Endothelial cell of umbilical vein (primary cell): ENCODE measurements at regions of chr16 and their contacts with region 1.

Region 1: DNA sequence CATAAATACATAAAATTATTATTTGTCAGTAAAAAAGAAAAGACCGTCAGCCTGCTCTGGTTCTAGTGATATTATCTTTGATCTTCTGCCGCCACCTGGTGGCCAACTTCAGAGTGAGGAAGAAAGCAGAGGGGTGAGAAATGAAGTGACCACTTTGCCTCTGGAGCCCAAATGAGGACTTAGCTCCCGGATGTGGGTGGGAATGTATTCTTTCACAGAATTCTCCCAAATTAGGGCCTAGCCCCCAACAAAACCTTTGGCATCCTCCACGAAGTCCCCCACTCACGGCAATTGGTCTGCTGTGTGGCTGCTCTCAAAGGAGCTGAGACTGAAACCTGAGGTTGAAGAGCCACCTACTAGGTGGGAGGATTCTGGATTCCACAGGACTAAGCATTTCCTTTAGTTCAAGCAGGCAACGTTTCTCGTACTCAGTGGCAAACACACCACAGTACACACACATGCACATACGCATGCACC is 4.9 kb upstream of the ZNF267 start:
- DNase-seq: peak; percentile 77
- H3K4me3 ChIP-seq: no peak overlapping the region
- H3K27ac ChIP-seq: peak overlapping the region; percentile 56
- H3K4me1 ChIP-seq: peaks cover 24% of the 10 kb centered on the region
- H3K27me3 ChIP-seq: peaks cover 2 to 10% of the 10 kb centered on the region in 2 experiments
- CTCF ChIP-seq: peak; percentile 62 to 63
- POLR2A ChIP-seq: no peak

Region 2: GRCh38 chr16:30844671-30845449 is 1023.9 kb before region 1 on chr16:
- CTCF ChIA-PET with region 1: no interaction called
- POLR2A ChIA-PET with region 1: no interaction called
- dilution Hi-C with region 1: no loop called
- intact Hi-C with region 1: loop called (anchors 5 kb)
- DNase-seq: peak; percentile 81
- H3K4me3 ChIP-seq: no peak overlapping the region
- H3K27ac ChIP-seq: no peak overlapping the region
- H3K4me1 ChIP-seq: no peaks in the 10 kb centered on the region
- H3K27me3 ChIP-seq: no peaks in the 10 kb centered on the region
- CTCF ChIP-seq: peak; percentile 80 to 82
- POLR2A ChIP-seq: no peak

Region 3: DNA sequence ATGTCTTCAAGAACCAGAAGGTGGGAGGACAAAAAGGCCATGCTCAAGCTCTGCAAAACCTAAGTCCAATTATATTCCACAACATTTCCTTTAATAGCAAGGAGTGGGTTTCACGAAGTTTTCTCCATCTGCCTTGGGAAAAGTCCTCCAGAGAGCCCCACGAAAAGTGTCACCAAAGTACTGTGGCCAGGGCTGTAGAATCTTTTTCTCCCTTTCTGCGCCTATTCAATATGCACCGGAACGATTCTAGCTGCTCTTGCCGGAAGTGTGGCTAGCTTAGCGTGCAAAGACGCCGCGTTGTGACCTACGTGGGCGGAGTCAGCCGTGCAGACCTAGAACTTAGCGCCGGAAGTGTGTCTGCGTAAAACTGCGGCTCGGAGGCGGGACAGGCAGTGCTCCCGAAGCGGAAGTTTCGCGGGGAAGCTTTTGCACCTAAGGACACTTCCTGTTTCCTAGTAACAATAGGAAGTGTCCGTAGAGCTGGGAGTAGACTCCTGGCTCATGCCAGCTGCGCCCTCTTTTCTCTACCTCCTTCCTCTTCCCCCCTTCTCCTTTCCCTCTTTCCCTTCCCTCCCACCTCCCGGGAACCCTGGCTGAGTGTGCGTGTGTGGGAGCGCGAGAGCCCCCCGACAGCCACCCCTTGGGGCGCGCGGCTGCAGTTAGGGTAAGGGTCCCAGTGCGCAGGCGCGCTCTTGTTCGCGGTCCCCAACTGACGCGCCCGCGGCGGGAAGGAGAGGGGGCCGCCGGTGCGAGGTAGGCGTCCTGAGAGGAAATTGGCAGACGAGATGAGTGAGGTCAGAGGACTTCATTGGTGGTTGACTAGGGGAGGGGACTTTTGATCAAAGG is 794.5 kb before region 1 on chr16 and contains the starts of genes ZNF646 and ZNF668:
- CTCF ChIA-PET with region 1: interaction called, 5 read pairs
- POLR2A ChIA-PET with region 1: no interaction called
- dilution Hi-C with region 1: no loop called
- intact Hi-C with region 1: loop called (anchors 10 kb)
- DNase-seq: peak; percentile 99
- H3K4me3 ChIP-seq: peak within 1 kb of the TSS; percentile 68 to 87 (median 87)
- H3K27ac ChIP-seq: peak within 1 kb of the TSS; percentile 86
- H3K4me1 ChIP-seq: peaks cover 14% of the 10 kb centered on the region
- H3K27me3 ChIP-seq: no peaks in the 10 kb centered on the region
- CTCF ChIP-seq: no peak
- POLR2A ChIP-seq: peak; percentile 84
- total RNA-seq, gene ZNF646: 13.1 and 15.9 TPM in 2 replicates
- total RNA-seq, gene ZNF668: 11.6 and 13.3 TPM in 2 replicates

Region 4: DNA sequence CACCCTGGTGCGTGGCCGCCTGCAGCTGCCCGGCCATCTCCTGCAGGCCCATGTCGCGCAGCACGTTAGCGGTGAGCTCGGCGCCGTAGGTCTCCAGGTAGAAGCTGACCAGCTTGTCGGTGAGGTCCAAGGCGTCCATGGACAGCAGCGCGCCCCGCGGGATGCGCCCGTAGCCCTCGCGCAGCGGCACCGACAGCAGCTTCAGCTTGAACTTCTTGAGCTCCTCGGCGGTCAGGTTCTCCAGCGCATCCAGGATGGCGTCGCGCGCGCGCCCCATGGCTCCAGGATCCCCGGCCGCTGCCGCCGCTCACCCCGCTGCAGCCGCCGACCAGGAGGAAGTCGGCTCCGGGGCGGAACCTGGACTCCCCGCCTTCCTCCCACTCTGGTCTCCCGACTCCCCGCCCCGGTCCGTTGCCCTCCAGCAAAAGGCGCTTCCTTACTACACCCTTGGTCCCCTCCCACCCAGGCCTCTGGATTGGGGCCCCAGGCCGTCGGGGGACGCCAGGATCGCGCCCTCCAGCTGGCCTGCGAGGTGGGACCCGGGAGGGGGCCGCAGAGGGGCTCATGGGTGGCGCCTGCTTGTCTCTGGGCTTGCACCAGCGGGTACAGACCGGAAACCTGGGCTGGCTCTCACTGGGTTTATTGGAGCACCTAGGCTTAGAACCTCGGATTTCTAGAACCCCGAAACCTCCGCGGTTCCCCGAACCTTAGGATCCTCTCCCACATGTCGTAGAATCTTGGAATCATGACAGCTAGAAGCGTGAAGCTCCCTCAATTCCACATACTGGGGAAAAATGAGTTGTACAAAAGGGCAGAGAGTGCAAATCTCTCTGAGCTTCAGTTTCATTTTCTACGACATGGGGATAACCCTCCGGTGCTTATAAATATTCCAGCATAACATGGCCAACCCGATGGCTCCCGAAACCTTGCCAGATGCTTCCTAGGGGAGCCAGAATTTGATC is 666.0 kb before region 1 on chr16 and contains the start of gene PYCARD:
- CTCF ChIA-PET with region 1: no interaction called
- POLR2A ChIA-PET with region 1: interaction called, 3 read pairs
- dilution Hi-C with region 1: no loop called
- intact Hi-C with region 1: loop called (anchors 2 kb)
- DNase-seq: peak; percentile 36
- H3K4me3 ChIP-seq: peak within 1 kb of the TSS; percentile 26 to 62 (median 36)
- H3K27ac ChIP-seq: no peak within 1 kb of the TSS
- H3K4me1 ChIP-seq: peaks cover 4% of the 10 kb centered on the region
- H3K27me3 ChIP-seq: peaks cover 2 to 6% of the 10 kb centered on the region in 2 experiments
- CTCF ChIP-seq: no peak
- POLR2A ChIP-seq: no peak
- total RNA-seq, gene PYCARD: 19.1 and 23.0 TPM in 2 replicates

Region 5: GRCh38 chr16:31458844-31459721 is 409.6 kb before region 1 on chr16 and contains the start of gene ARMC5:
- CTCF ChIA-PET with region 1: interaction called, 25 read pairs
- POLR2A ChIA-PET with region 1: interaction called, 6 read pairs
- dilution Hi-C with region 1: no loop called
- intact Hi-C with region 1: loop called (anchors 1 kb)
- DNase-seq: peak; percentile 96
- H3K4me3 ChIP-seq: peak within 1 kb of the TSS; percentile 41 to 81 (median 71)
- H3K27ac ChIP-seq: peak within 1 kb of the TSS; percentile 96
- H3K4me1 ChIP-seq: peaks cover 23% of the 10 kb centered on the region
- H3K27me3 ChIP-seq: no peaks in the 10 kb centered on the region
- CTCF ChIP-seq: peak; percentile 47 to 70
- POLR2A ChIP-seq: peak; percentile 38
- total RNA-seq, gene ARMC5: 17.3 and 17.9 TPM in 2 replicates

Region 6: DNA sequence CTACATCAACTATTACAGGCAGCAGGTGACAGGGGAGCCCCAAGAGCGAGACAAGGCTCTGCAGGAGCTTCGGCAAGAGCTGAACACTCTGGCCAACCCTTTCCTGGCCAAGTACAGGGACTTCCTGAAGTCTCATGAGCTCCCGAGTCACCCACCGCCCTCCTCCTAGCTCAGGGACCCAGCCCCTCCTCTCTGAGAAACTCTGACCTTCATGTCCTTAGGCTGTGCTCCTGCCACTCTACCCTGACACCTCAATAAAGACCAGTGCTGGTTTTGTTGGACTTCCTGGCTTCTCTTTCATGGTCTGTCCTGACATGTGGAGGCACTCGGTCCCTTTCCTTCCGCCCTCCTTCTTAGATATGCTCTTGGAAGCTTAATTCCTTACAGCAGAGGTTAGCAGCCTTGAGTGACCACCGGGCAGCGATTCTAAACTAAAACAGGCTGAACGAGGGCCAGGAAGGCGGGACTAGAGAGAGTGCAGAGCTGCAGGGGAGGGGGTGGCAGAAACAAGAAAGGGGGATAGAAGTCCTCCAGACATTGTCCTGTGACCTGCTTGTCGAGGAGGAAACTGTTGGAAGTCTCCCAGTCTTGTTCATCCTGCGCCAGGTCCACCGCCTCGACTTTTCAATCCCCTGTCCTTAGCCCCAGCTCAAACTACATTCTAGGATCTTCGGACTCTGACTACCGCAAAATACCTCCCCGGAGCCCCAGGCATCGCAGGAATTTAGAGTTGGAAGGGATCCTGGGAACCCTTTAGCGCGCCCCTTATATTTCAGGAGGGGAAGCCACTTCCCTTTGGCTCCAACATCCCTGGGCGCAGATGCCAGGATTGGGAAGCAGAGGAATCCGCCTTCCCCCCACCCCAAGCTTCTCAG is 340.0 kb before region 1 on chr16:
- CTCF ChIA-PET with region 1: no interaction called
- POLR2A ChIA-PET with region 1: no interaction called
- dilution Hi-C with region 1: no loop called
- intact Hi-C with region 1: no loop called
- DNase-seq: no peak
- H3K4me3 ChIP-seq: no peak overlapping the region
- H3K27ac ChIP-seq: no peak overlapping the region
- H3K4me1 ChIP-seq: no peaks in the 10 kb centered on the region
- H3K27me3 ChIP-seq: peaks cover 23 to 28% of the 10 kb centered on the region in 2 experiments
- CTCF ChIP-seq: no peak
- POLR2A ChIP-seq: no peak

Region 7: GRCh38 chr16:31713071-31713944 is 155.4 kb before region 1 on chr16:
- CTCF ChIA-PET with region 1: interaction called, 7 read pairs
- POLR2A ChIA-PET with region 1: interaction called, 6 read pairs
- dilution Hi-C with region 1: no loop called
- intact Hi-C with region 1: loop called (anchors 5 kb)
- DNase-seq: peak; percentile 94
- H3K4me3 ChIP-seq: peak overlapping the region; percentile 86 to 93 (median 92)
- H3K27ac ChIP-seq: peak overlapping the region; percentile 89
- H3K4me1 ChIP-seq: peaks cover 8% of the 10 kb centered on the region
- H3K27me3 ChIP-seq: no peaks in the 10 kb centered on the region
- CTCF ChIP-seq: no peak
- POLR2A ChIP-seq: peak; percentile 97

Region 8: DNA sequence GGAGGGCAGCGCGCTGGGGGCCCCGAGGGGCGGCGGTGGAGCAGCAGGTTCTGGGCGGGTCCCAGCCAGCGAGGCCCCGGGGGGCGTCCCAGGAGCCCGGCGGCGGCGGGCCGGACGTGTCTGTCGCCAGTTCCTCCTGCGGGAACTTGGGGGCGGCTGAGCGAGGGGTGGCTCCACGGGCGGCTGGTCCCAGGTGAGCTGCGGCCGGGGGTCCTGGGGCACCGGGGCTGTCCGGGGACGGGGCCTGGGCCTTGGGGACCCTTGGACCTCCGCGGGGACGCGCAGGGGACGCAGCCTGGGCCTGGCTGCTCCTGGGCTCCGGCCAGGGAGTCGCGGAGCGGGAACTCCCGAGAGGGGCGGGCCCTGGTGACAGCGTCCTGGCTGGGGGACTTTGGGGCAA is 49.3 kb before region 1 on chr16:
- CTCF ChIA-PET with region 1: no interaction called
- POLR2A ChIA-PET with region 1: no interaction called
- dilution Hi-C with region 1: no loop called
- intact Hi-C with region 1: no loop called
- DNase-seq: no peak
- H3K4me3 ChIP-seq: no peak overlapping the region
- H3K27ac ChIP-seq: no peak overlapping the region
- H3K4me1 ChIP-seq: no peaks in the 10 kb centered on the region
- H3K27me3 ChIP-seq: no peaks in the 10 kb centered on the region
- CTCF ChIP-seq: no peak
- POLR2A ChIP-seq: no peak

Region 9: DNA sequence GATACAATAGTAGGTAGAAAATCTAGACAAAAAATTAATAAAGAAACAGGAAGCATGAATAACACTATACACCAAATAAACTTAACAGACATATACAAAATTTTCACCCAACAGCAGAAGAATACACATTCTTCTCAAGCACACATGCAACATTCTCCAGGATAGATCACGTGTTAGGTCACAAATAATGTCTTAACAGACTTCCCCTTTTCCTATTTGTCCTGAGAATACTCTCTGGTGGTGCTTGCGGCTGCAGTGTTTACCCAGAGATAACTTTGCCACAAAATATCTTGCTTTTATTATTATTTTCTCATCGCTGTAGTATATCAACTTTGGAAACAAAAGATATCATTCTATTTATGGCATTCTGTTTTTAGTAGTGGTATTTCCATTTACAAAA is 35.7 kb before region 1 on chr16:
- CTCF ChIA-PET with region 1: no interaction called
- POLR2A ChIA-PET with region 1: no interaction called
- dilution Hi-C with region 1: no loop called
- intact Hi-C with region 1: no loop called
- DNase-seq: no peak
- H3K4me3 ChIP-seq: no peak overlapping the region
- H3K27ac ChIP-seq: no peak overlapping the region
- H3K4me1 ChIP-seq: no peaks in the 10 kb centered on the region
- H3K27me3 ChIP-seq: no peaks in the 10 kb centered on the region
- CTCF ChIP-seq: no peak
- POLR2A ChIP-seq: no peak

Region 10: DNA sequence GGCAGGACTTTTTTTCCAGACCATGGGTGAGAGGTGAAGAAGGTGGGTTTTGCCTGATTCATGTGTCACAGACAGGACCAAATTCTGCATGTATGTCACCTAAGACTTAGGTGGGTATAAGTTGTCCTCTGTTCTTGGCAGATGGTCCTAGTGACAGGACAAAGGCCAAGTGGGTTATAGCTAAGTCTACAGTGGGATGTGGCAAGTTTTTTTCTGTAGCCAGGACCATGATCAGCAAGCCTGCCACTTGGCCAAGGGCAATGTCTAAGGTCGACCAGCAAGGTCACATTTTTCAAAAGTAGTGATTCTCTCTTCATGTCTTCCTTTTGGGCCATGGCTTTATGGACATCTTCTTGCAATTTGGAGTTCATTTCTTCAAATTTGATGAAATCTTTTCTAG is 25.1 kb after region 1 on chr16:
- CTCF ChIA-PET with region 1: no interaction called
- POLR2A ChIA-PET with region 1: no interaction called
- dilution Hi-C with region 1: no loop called
- intact Hi-C with region 1: no loop called
- DNase-seq: no peak
- H3K4me3 ChIP-seq: no peak overlapping the region
- H3K27ac ChIP-seq: no peak overlapping the region
- H3K4me1 ChIP-seq: no peaks in the 10 kb centered on the region
- H3K27me3 ChIP-seq: no peaks in the 10 kb centered on the region
- CTCF ChIP-seq: no peak
- POLR2A ChIP-seq: no peak